ENCODE measurements at regions of chr16 and their contacts with region 1.

Region 1: DNA sequence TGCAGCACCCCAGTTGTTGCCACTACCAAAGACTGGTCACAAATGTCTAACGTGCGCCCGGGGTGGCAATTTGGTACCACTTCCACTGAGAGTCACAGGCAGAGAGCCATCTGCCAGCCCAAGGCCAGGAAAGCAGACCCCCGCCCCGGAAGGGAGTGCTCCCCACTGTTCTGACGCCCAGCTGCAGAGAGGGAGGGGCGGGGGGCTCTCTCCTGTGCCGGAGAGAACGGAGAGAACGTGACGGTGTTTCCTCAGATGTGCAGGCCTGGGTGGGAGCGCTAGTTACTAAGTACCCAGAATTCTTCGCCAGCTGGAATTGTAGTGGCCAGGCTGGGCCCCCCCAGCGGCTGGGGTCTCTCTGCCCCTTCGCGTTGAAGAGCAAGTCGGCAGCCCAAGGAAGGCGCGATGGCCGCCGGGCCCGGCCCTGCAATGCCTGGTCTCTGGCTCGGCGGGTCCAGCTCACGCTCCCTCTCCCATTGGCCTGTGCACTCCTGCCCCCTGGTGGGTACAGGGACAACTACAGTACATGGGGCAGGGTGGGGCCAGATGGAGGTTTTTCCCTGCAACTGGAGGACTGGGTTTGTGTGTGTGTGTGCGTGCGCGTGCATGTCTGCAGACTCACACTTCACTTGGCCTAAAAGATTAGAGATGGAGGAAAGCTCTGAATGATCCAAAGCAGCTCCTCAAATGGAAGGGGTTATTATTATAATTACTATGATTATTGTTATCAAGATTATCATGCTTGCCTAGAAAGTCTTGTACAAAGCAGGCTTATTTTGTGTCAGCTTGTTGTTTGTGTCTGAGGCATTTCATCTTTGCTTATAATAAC is 107.1 kb downstream of the AMFR start:
- DNase-seq: peak; percentile 86 to 93 (median 90)
- H3K4me3 ChIP-seq: peak overlapping the region in 55 of 59 donors; percentile 6 to 59 (median 43)
- H3K27ac ChIP-seq: peak overlapping the region; percentile 82 to 100 (median 96)
- H3K27me3 ChIP-seq: no peaks in the 10 kb centered on the region
- CTCF ChIP-seq: peak; percentile 88 to 99 (median 97)

Region 2: GRCh38 chr16:56041686-56042085 is 276.5 kb before region 1 on chr16:
- intact Hi-C with region 1: loop called in 1 of 2 experiments (anchors 10 kb)
- DNase-seq: peak in 3 of 10 donors; percentile 20 to 60 (median 30)
- H3K4me3 ChIP-seq: no peak overlapping the region
- H3K27ac ChIP-seq: no peak overlapping the region
- H3K27me3 ChIP-seq: no peaks in the 10 kb centered on the region
- CTCF ChIP-seq: peak in 49 of 56 donors; percentile 12 to 63 (median 39)

Region 3: DNA sequence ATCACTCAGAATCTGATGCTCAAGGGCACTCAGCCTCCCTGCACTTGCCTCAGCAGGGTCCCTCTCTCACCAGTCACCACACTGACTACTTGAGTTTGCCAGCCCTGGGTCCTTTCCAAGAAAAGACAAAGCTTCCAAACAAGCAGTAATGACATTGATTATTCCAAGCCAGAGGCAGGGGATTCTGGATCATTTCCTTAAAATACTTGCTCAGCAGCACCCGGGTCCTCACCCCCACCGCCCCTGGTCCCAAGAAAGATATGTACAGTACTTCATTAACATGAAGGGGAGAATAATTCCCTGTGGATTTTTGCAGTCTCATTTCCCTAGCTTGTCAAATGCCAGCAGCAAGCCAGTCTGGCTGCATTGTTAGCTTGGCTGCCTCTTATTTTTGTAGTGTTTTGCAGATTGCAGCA is 210.1 kb before region 1 on chr16:
- intact Hi-C with region 1: loop called (anchors 5 to 10 kb)
- DNase-seq: peak; percentile 21 to 75 (median 54)
- H3K4me3 ChIP-seq: peak overlapping the region in 17 of 59 donors; percentile 2 to 47 (median 23)
- H3K27ac ChIP-seq: peak overlapping the region in 56 of 59 donors; percentile 8 to 88 (median 72)
- H3K27me3 ChIP-seq: no peaks in the 10 kb centered on the region
- CTCF ChIP-seq: peak in 2 of 56 donors; percentile 7 to 33

Region 4: DNA sequence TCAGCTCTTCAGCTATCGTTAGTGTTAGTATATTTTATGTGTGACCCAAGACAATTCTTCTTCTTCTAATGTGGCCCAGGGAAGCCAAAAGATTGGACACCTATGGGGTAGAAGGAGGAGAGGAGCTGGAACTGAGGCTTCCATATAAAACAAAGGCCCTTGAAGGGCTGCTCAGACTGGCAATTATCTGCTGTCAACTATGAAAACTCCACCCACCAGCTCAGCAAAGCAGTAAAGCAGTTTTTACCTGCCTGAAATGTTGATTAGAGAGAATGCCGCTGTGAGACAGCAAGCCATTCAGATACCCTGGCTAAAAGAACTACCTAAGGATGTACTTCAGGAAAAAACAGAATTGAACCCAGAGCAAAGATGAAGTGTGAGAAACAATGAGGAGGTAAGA is 172.8 kb before region 1 on chr16:
- intact Hi-C with region 1: no loop called
- DNase-seq: no peak
- H3K4me3 ChIP-seq: no peak overlapping the region
- H3K27ac ChIP-seq: no peak overlapping the region
- H3K27me3 ChIP-seq: no peaks in the 10 kb centered on the region
- CTCF ChIP-seq: no peak

Region 5: DNA sequence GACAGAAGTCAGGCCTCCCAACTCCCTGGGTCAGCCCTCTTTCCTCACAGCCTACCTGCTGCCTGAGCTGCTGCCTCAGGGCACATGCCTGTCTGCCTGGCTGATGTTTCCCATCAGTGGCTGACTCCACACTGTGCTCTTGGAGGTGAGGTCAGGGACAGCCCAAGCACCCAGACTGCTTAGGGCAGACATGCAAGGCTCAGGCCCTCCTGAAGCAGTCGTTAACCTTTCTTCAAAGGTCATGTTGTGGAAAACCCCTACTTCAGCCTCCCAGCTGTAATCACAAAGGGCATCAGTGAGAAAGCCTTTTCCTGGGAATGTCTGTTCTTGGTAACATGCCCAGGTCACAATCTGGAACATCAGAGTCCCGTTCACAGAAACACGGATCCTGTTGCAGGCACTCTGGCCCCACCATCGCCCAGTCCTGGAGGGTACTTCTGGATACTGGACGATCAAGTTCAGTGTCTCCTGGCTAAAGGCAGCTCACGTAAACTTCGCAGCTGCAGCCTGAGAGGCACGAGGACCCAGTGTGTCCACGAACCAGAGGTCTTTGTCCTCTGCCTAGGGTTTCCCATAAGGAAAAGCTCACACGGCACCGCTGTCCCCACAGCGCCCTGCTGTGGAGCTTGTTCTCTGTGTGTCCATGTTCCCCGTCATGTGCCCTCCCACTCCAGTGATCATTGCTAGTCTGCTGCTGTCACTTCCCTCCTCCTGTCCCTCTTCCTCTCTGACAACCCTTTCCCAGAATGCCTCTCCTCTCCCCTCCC is 72.0 kb before region 1 on chr16:
- intact Hi-C with region 1: loop called in 1 of 2 experiments (anchors 5 kb)
- DNase-seq: peak in 9 of 10 donors; percentile 71 to 92 (median 85)
- H3K4me3 ChIP-seq: peak overlapping the region in 1 of 59 donors; percentile 12
- H3K27ac ChIP-seq: peak overlapping the region; percentile 66 to 100 (median 93)
- H3K27me3 ChIP-seq: no peaks in the 10 kb centered on the region
- CTCF ChIP-seq: peak in 50 of 56 donors; percentile 20 to 73 (median 51)

Region 6: DNA sequence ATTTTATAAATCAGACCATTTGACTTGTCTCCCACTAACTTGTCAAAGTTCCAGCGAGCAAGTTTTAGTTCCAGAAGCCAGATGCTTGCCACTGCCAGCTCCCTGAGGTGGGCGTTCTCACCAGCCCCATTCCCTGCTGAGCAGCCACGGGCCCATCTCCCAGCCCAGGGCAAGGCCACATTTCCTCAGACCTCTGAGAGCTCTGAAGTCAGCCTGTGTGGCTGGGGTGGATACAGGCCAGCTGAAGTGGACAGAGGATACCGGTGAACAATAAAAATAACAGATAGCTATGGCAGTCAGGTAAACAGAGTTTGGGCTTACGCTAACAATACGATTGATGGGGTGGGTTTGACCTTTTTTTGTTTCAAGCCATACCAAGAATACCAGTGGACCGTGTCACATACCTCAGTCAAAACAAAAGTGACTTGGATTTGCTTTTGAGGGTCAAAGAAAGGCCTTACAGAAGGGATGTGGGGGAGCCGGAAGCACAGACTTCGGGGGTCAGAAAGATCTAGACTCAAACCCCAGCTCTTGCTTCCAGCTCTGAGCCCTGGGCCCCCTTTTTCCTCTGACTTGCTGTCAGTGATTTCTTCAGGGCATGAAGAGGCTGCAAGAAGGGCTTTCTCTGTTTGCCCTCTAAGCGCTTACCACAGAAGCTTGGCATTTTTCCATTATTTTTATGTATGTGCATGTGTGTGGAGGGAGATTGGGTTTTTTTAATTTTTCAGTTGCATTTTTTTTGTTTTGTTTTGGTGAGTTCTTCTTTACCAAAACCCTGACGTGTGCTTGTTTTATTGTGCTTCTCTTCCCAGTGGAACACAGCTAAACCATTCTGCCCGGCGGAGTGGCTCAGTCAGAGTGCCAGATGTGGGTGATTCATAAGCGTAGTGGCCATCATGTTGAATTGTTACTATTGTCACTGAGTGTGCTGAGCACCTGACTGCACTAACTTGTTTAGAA is 17.0 kb before region 1 on chr16:
- intact Hi-C with region 1: no loop called
- DNase-seq: peak in 7 of 10 donors; percentile 68 to 84 (median 79)
- H3K4me3 ChIP-seq: peak overlapping the region in 1 of 59 donors; percentile 6
- H3K27ac ChIP-seq: peak overlapping the region; percentile 76 to 100 (median 98)
- H3K27me3 ChIP-seq: no peaks in the 10 kb centered on the region
- CTCF ChIP-seq: no peak

Measured in dorsolateral prefrontal cortex (tissue), 120 donors.